Naive thymus-derived CD4-positive, alpha-beta T cell (primary cell): ENCODE measurements at regions of chr16 and their contacts with region 1.

Region 1: GRCh38 chr16:74309789-74310781 is 13.5 kb downstream of the PSMD7 start:
- DNase-seq: peak in 4 of 9 donors; percentile 17 to 44 (median 26)
- ATAC-seq: peak; percentile 64
- H3K4me3 ChIP-seq: no peak overlapping the region
- H3K4me3 Mint-ChIP-seq: no peak overlapping the region
- H3K27ac ChIP-seq: no peak overlapping the region
- H3K27ac Mint-ChIP-seq: no peak overlapping the region
- H3K4me1 ChIP-seq: no peaks in the 10 kb centered on the region
- H3K4me1 Mint-ChIP-seq: peaks cover 0 to 4% (median 2%) of the 10 kb centered on the region in 7 donors
- H3K27me3 ChIP-seq: no peaks in the 10 kb centered on the region
- H3K27me3 Mint-ChIP-seq: no peaks in the 10 kb centered on the region

Region 2: GRCh38 chr16:74431516-74431915 is 121.4 kb after region 1 on chr16:
- CTCF ChIA-PET with region 1: interaction called, 3 read pairs
- POLR2A ChIA-PET with region 1: no interaction called
- intact Hi-C with region 1: loop called in 1 of 2 experiments (anchors 5 kb)
- DNase-seq: no peak
- ATAC-seq: no peak
- H3K4me3 ChIP-seq: no peak overlapping the region
- H3K4me3 Mint-ChIP-seq: no peak overlapping the region
- H3K27ac ChIP-seq: no peak overlapping the region
- H3K27ac Mint-ChIP-seq: no peak overlapping the region
- H3K4me1 ChIP-seq: no peaks in the 10 kb centered on the region
- H3K4me1 Mint-ChIP-seq: peaks cover 0 to 9% (median 3%) of the 10 kb centered on the region in 7 donors
- H3K27me3 ChIP-seq: no peaks in the 10 kb centered on the region
- H3K27me3 Mint-ChIP-seq: no peaks in the 10 kb centered on the region

Region 3: GRCh38 chr16:74466872-74467271 is 156.8 kb after region 1 on chr16:
- CTCF ChIA-PET with region 1: no interaction called
- POLR2A ChIA-PET with region 1: no interaction called
- intact Hi-C with region 1: no loop called
- DNase-seq: peak in 2 of 9 donors; percentile 5 to 9
- ATAC-seq: peak; percentile 63
- H3K4me3 ChIP-seq: no peak overlapping the region
- H3K4me3 Mint-ChIP-seq: peak overlapping the region in 2 of 10 donors; percentile 9 to 26
- H3K27ac ChIP-seq: no peak overlapping the region
- H3K27ac Mint-ChIP-seq: peak overlapping the region; percentile 15 to 84 (median 61)
- H3K4me1 ChIP-seq: peaks cover 4 to 5% of the 10 kb centered on the region in 2 donors
- H3K4me1 Mint-ChIP-seq: peaks cover 10 to 20% (median 16%) of the 10 kb centered on the region in 7 donors
- H3K27me3 ChIP-seq: no peaks in the 10 kb centered on the region
- H3K27me3 Mint-ChIP-seq: no peaks in the 10 kb centered on the region